AG04449 (cell line): ENCODE measurements at regions of chr3 and their contacts with region 1.

Region 1: DNA sequence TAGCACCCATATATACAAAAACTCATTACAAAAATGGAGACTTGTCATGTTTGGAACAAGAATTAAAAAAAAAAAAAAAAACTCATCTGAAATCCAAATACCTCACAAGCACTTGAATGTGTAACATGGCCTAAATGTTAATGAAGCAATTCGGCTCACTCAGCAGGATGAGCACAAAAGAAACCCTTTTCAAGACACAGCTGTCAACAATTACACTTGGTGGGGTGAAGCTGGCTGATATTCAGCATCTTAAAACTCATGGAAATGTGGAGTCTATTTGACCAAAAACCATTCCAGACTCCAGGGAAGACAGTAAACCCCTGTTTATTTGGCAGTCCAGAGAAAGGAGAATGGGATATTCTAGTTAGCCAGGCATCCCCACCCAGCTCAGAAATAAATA is 205.4 kb upstream of the TSC22D2 start:
- DNase-seq: no peak
- H3K4me3 ChIP-seq: no peak overlapping the region
- CTCF ChIP-seq: no peak

Region 2: GRCh38 chr3:149104516-149104915 is 1098.2 kb before region 1 on chr3:
- CTCF ChIA-PET with region 1: no interaction called
- POLR2A ChIA-PET with region 1: no interaction called
- DNase-seq: no peak
- H3K4me3 ChIP-seq: no peak overlapping the region
- CTCF ChIP-seq: no peak

Region 3: DNA sequence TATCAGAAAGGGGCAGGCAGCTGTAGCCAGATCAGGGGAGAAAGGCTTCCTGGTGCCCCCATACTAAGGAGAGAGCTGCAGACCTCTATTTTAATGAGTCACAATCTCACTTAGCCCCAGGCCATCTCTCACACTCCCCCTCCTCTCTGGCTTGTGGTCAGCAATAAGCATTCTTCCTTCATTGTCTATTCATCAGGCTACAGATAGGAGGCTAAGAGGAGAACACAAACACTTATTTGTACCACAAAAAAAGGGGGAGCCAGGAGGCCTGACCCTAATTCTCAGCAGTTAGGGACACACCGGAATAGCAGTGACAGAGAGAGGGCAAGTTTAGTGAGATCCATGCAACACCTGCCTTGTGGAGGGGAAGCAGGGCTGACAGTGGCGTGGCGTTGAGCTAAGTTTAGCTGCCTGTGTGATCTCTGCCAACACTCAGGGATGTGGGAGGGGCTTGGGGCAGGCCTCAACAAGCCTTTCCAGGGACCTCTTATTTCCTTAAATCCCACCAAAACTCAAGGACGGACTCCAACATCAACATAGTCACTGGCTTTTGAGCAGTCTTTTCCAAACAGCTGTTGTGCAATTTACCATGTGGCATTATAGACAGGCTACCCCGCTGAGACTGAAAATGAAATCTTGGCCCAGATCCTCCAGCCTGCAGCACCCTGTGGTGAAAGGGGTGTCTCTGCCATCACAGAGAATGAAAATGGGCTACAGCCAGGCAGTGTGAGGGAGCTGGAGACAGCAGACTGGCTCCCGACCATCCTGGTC is 13.5 kb after region 1 on chr3:
- CTCF ChIA-PET with region 1: interaction called, 14 read pairs
- POLR2A ChIA-PET with region 1: no interaction called
- DNase-seq: peak; percentile 68
- H3K4me3 ChIP-seq: no peak overlapping the region
- CTCF ChIP-seq: no peak